ENCODE measurements at regions of chr11 and their contacts with region 1.

Region 1: DNA sequence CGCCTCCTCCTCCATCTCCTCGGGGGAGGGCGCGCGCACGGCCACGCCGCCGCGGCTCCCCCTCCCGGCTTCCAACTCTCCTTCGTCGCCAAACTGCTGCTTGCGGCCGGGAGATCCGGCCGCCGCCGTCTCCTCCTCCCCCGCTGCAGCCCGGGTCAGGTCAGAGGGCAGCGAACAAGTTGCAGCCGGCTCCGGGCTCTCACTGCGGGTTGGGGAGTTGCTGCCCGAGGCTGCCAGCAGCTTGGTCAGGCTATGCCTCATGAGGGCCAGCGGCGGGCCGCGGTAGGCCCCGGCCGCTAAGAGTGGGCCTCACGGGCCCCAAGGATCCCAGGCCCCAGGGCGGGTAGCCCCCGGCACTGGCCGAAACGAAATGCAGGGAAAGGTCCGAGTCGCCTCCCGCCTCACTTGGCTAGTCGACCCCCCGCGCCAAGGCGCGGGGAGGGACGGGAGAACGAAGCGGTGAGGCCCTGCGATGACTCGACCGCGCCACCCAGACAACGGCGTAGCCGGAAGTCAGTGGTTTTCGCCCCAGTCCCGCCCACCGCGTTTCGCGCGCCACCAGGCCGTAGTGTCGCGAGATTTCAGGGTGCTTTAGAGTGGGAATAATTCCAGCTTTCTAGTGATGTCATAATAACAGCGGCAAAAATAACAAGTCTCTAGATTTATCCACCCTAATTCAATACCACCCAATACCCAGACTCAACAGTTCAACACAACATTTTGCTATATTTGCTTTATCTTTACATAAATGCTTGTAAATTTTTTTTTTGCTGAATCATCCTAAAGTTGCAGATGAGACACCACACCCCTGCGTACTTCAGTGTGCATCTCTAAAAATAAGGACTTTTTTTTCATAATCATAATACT is at the start of gene CREBZF:
- DNase-seq: peak; percentile 94 to 96
- ATAC-seq: peak; percentile 96 to 98 (median 96)
- H3K4me3 ChIP-seq: peak within 1 kb of the TSS; percentile 64 to 98 (median 88)
- H3K27ac ChIP-seq: peak within 1 kb of the TSS; percentile 86 to 100 (median 98)
- H3K4me1 ChIP-seq: peaks cover 4 to 44% (median 38%) of the 10 kb centered on the region in 9 donors
- H3K27me3 ChIP-seq: no peaks in the 10 kb centered on the region
- CTCF ChIP-seq: no peak
- total RNA-seq, gene CREBZF: 10.5 to 17.7 (median 13.0) TPM

Region 2: GRCh38 chr11:85627998-85628770 is 36.7 kb before region 1 on chr11 and contains the start of gene TMEM126B:
- intact Hi-C with region 1: loop called in 6 of 10 experiments (anchors 1 to 5 kb)
- DNase-seq: peak; percentile 97 to 98
- ATAC-seq: peak; percentile 99 to 100 (median 100)
- H3K4me3 ChIP-seq: peak within 1 kb of the TSS; percentile 59 to 84 (median 78)
- H3K27ac ChIP-seq: peak within 1 kb of the TSS; percentile 77 to 96 (median 92)
- H3K4me1 ChIP-seq: peaks cover 0 to 45% (median 26%) of the 10 kb centered on the region in 9 donors
- H3K27me3 ChIP-seq: no peaks in the 10 kb centered on the region
- CTCF ChIP-seq: peak in 1 of 9 donors; percentile 3
- total RNA-seq, gene TMEM126B: 44.3 to 63.2 (median 51.6) TPM

Region 3: GRCh38 chr11:85647604-85648299 is 17.1 kb before region 1 on chr11 and contains the start of gene TMEM126A:
- intact Hi-C with region 1: loop called in 1 of 10 experiments (anchors 2 kb)
- DNase-seq: peak; percentile 88 to 89
- ATAC-seq: peak; percentile 97 to 100 (median 99)
- H3K4me3 ChIP-seq: peak within 1 kb of the TSS; percentile 53 to 79 (median 68)
- H3K27ac ChIP-seq: peak within 1 kb of the TSS in 9 of 10 donors; percentile 57 to 89 (median 83)
- H3K4me1 ChIP-seq: peaks cover 0 to 39% (median 22%) of the 10 kb centered on the region in 9 donors
- H3K27me3 ChIP-seq: peaks cover 0 to 18% (median 0%) of the 10 kb centered on the region in 7 donors
- CTCF ChIP-seq: no peak
- total RNA-seq, gene TMEM126A: 56.9 to 79.3 (median 67.3) TPM

Region 4: GRCh38 chr11:85718991-85719807 is 54.4 kb after region 1 on chr11:
- intact Hi-C with region 1: loop called in 1 of 10 experiments (anchors 5 kb)
- DNase-seq: peak; percentile 20 to 46
- ATAC-seq: peak; percentile 84 to 98 (median 92)
- H3K4me3 ChIP-seq: peak overlapping the region in 7 of 10 donors; percentile 5 to 44 (median 36)
- H3K27ac ChIP-seq: peak overlapping the region in 9 of 10 donors; percentile 41 to 85 (median 73)
- H3K4me1 ChIP-seq: peaks cover 0 to 24% (median 10%) of the 10 kb centered on the region in 9 donors
- H3K27me3 ChIP-seq: no peaks in the 10 kb centered on the region
- CTCF ChIP-seq: no peak

Measured in heart right ventricle (tissue), 16 donors.